ENCODE measurements at regions of chr6 and their contacts with region 1.

Region 1: DNA sequence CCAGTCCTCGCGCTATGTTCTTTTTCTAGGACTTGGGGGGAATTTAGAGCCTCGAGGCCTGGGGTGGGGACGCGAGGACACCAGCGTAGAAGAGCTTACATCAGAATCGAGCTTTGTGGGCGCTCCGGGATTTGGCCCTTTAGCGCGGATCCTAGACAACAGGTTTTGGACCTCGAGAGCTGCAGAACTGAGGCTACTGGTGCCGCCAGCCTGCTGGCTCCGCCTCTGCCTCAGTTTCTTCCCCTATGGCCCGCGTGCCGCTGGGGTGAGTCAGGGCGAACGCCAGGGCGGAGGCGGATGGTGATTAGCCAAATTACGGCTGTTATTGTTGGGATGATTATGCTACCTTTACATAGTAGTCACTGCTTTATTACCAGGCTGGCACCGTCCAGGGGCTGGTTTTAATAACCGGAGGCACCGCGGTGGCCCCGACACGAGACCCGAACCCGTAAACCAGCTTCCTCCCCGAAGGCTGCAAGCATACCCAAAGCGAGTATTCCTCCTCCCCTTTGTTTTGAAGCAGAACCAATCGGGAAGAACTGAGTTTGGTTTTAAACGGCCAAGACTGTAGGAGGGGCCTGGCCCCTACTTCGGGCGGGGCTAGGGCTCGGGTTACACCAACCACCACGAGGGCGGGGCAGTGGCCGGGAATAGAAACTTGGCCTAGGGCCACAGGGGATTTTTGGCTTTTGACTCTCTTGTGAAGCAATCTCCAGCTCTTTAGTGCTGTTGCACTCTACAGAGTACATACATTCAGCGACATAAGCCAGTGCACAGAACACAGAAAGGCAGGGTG is 639 bp upstream of the GTPBP2 start:
- DNase-seq: peak; percentile 95 to 97 (median 96)
- ATAC-seq: peak; percentile 87 to 93 (median 89)
- H3K4me3 ChIP-seq: peak overlapping the region; percentile 66 to 97 (median 84)
- H3K27ac ChIP-seq: peak overlapping the region; percentile 89 to 100 (median 98)
- H3K4me1 ChIP-seq: peaks cover 3 to 34% (median 26%) of the 10 kb centered on the region in 12 donors
- H3K27me3 ChIP-seq: no peaks in the 10 kb centered on the region
- CTCF ChIP-seq: no peak
- POLR2A ChIP-seq: peak; percentile 87 to 96

Region 2: DNA sequence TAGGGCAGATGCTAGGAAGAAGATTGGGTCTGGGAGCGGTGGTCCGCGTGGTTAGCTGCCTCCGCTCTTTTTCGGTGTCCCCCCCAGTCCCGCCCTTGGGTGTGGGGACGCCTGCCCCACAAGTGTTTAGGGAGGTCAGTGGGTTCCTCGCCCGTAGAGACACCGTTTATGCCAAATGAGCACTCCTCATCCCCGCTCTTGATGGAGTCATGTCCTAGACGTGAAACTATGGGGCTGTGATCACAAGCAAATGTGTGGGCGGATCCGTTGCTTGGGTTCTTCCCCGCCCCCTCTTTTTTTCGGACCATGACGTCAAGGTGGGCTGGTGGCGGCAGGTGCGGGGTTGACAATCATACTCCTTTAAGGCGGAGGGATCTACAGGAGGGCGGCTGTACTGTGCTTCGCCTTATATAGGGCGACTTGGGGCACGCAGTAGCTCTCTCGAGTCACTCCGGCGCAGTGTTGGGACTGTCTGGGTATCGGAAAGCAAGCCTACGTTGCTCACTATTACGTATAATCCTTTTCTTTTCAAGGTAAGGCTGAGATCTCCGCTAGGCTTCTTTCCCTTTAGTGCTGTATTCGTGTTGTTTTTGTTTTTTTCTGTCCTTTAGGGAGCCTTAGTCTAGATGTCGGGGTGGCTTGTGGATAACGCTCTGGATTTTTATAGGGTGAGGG is 617.1 kb after region 1 on chr6 and contains the start of gene HSP90AB1:
- intact Hi-C with region 1: loop called in 1 of 10 experiments (anchors 10 kb)
- DNase-seq: peak; percentile 94 to 97 (median 95)
- ATAC-seq: peak; percentile 83 to 88 (median 86)
- H3K4me3 ChIP-seq: peak within 1 kb of the TSS; percentile 69 to 98 (median 81)
- H3K27ac ChIP-seq: peak within 1 kb of the TSS; percentile 90 to 100 (median 98)
- H3K4me1 ChIP-seq: peaks cover 0 to 45% (median 37%) of the 10 kb centered on the region in 12 donors
- H3K27me3 ChIP-seq: no peaks in the 10 kb centered on the region
- CTCF ChIP-seq: no peak
- POLR2A ChIP-seq: peak; percentile 81 to 95
- total RNA-seq, gene HSP90AB1: 725 to 1,040 (median 857) TPM